Heart right ventricle (tissue), 16 donors: ENCODE measurements at regions of chr18 and their contacts with region 1.

Region 1: GRCh38 chr18:49061991-49062831 is 111.4 kb upstream of the SMAD7 start:
- DNase-seq: no peak
- ATAC-seq: peak in 6 of 8 donors; percentile 22 to 59 (median 49)
- H3K4me3 ChIP-seq: no peak overlapping the region
- H3K27ac ChIP-seq: peak overlapping the region in 6 of 10 donors; percentile 19 to 60 (median 41)
- H3K4me1 ChIP-seq: peaks cover 6 to 29% (median 18%) of the 10 kb centered on the region in 9 donors
- H3K27me3 ChIP-seq: no peaks in the 10 kb centered on the region
- CTCF ChIP-seq: no peak

Region 2: GRCh38 chr18:49169037-49169521 is 106.9 kb after region 1 on chr18:
- intact Hi-C with region 1: loop called in 1 of 10 experiments (anchors 10 kb)
- DNase-seq: no peak
- ATAC-seq: no peak
- H3K4me3 ChIP-seq: no peak overlapping the region
- H3K27ac ChIP-seq: no peak overlapping the region
- H3K4me1 ChIP-seq: peaks cover 0 to 28% (median 9%) of the 10 kb centered on the region in 9 donors
- H3K27me3 ChIP-seq: no peaks in the 10 kb centered on the region
- CTCF ChIP-seq: no peak

Region 3: DNA sequence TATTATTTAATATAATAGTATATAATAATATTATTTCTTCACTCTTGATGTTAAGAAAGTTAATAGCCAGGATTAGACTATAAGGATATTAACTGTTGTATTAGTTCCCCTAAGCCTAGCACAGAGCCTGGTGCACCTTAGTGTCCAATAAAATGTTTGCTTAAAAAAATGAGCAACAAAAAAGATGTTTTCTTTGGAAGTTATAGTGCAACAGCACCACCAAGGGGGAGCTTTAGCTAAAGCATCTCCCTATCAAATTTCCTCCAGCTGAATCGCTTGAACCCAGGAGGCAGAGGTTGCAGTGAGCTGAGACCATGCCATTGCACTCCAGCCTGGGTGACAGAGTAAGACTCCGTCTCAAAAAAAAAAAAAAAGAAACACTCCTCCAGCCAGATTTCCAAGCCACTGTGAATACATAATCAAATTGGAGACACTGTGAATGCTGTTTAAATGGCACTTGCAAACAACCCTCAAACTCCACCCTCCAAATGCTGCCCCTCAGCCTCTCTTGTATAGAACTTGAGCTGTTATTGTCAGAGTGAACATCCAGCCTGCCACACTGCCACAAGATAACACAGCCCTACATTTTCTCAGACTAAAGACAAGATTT is 176.3 kb after region 1 on chr18:
- intact Hi-C with region 1: loop called in 1 of 10 experiments (anchors 5 kb)
- DNase-seq: peak in 1 of 2 donors; percentile 10
- ATAC-seq: no peak
- H3K4me3 ChIP-seq: no peak overlapping the region
- H3K27ac ChIP-seq: no peak overlapping the region
- H3K4me1 ChIP-seq: peaks cover 0 to 6% (median 0%) of the 10 kb centered on the region in 9 donors
- H3K27me3 ChIP-seq: no peaks in the 10 kb centered on the region
- CTCF ChIP-seq: peak; percentile 10 to 56 (median 49)